HEK293T (cell line): ENCODE measurements at regions of chr3 and their contacts with region 1.

Region 1: GRCh38 chr3:119891944-119892721 is 110.2 kb downstream of the NR1I2 start:
- DNase-seq: peak; percentile 57

Region 2: DNA sequence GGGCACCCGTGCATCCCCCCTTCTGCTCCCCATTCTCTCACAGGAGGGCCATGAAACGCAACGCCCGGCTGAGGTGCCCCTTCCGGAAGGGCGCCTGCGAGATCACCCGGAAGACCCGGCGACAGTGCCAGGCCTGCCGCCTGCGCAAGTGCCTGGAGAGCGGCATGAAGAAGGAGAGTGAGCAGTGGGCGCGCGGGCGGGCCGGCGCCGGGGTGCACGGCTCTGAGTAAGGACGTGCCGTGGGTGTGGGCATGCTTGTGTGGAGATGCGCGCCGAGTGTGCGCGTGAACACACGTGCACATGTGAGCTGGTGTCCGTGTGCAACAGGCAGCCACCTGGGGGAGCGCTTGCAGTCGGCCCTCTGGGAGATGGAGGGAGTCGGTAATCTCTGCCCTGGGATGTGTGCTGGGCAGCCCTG is 82.1 kb before region 1 on chr3:
- CTCF ChIA-PET with region 1: no interaction called
- POLR2A ChIA-PET with region 1: no interaction called
- DNase-seq: no peak

Region 3: GRCh38 chr3:120147072-120147871 is 255.1 kb after region 1 on chr3:
- CTCF ChIA-PET with region 1: interaction called, 11 read pairs
- POLR2A ChIA-PET with region 1: no interaction called
- DNase-seq: no peak